Activated naive CD4-positive, alpha-beta T cell treated with anti-CD3 and anti-CD28 coated beads, Interleukin-2, amount 10 ng/mL, durations not matched to agents 7 days and 5 days (primary cell): ENCODE measurements at regions of chr9 and their contacts with region 1.

Region 1: DNA sequence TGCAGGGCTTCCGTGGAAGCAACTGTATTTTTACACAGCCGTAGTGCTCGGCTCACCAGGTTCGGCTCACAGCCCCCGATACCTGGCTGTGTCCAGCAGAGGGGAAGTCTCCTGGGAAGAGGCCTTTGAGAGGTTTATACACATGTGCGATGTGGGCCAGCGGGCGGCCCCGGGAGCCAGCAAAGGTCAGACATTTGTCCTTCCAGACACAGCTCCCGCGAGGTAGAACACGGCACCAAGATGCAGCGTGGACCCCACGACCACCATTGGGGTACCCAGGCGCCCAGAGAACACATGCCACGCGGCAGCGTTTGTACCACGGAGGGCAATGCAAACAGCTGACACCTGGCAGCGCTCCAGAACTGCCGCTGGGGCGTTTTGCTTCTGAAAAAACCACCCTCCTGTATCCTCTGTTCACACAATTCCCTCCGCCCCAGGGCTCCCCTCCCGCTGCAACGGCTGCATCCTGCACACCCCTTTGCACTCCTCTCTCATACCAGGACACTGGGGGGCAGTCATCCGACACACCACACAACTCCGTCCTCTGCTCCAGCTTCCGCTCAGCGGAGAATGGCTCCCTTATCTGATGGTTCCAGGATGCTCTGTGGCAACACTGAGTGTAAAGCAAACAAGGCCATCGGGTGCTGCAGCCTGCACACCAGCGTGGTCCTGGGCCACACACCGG is 235.3 kb downstream of the SYK start:
- DNase-seq: peak; percentile 86
- H3K4me3 Mint-ChIP-seq: no peak overlapping the region
- H3K27ac Mint-ChIP-seq: peak overlapping the region; percentile 44
- H3K4me1 Mint-ChIP-seq: peaks cover 57% of the 10 kb centered on the region
- H3K27me3 Mint-ChIP-seq: peaks cover 53% of the 10 kb centered on the region

Region 2: GRCh38 chr9:91089405-91090129 is 52.6 kb after region 1 on chr9:
- CTCF ChIA-PET with region 1: interaction called, 16 read pairs
- DNase-seq: peak; percentile 46
- H3K4me3 Mint-ChIP-seq: no peak overlapping the region
- H3K27ac Mint-ChIP-seq: no peak overlapping the region
- H3K4me1 Mint-ChIP-seq: peaks cover 17% of the 10 kb centered on the region
- H3K27me3 Mint-ChIP-seq: peaks cover 29% of the 10 kb centered on the region

Region 3: DNA sequence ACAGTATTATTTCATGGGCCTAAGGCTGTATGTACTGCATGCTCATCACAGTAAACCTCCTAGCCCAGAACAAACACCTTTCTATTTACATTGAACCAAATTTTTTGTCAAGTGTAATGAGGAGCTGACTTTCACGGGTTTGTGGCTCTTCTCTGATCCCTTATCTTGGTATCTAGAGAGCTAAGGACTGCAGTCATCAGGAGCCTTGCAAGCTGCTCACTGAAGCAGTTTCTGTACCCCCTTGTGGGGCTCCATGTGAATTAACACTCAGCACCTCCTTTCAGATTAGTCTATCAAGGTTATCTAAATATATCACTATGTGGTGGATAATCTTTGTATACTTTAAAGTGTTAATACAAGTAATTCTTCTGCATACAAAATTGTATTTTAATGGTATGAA is 216.5 kb after region 1 on chr9:
- CTCF ChIA-PET with region 1: interaction called, 19 read pairs
- DNase-seq: peak; percentile 67
- H3K4me3 Mint-ChIP-seq: no peak overlapping the region
- H3K27ac Mint-ChIP-seq: no peak overlapping the region
- H3K4me1 Mint-ChIP-seq: peaks cover 20% of the 10 kb centered on the region
- H3K27me3 Mint-ChIP-seq: no peaks in the 10 kb centered on the region

Region 4: GRCh38 chr9:91422758-91423711 is 386.1 kb after region 1 on chr9:
- CTCF ChIA-PET with region 1: interaction called, 60 read pairs
- DNase-seq: peak; percentile 76
- H3K4me3 Mint-ChIP-seq: peak overlapping the region; percentile 92
- H3K27ac Mint-ChIP-seq: peak overlapping the region; percentile 90
- H3K4me1 Mint-ChIP-seq: peaks cover 64% of the 10 kb centered on the region
- H3K27me3 Mint-ChIP-seq: peaks cover 52% of the 10 kb centered on the region

Region 5: GRCh38 chr9:91433180-91433579 is 396.2 kb after region 1 on chr9:
- CTCF ChIA-PET with region 1: interaction called, 26 read pairs
- DNase-seq: no peak
- H3K4me3 Mint-ChIP-seq: no peak overlapping the region
- H3K27ac Mint-ChIP-seq: no peak overlapping the region
- H3K4me1 Mint-ChIP-seq: peaks cover 4% of the 10 kb centered on the region
- H3K27me3 Mint-ChIP-seq: peaks cover 48% of the 10 kb centered on the region